Ovary (tissue), 10 donors: ENCODE measurements at regions of chr11 and their contacts with region 1.

Region 1: DNA sequence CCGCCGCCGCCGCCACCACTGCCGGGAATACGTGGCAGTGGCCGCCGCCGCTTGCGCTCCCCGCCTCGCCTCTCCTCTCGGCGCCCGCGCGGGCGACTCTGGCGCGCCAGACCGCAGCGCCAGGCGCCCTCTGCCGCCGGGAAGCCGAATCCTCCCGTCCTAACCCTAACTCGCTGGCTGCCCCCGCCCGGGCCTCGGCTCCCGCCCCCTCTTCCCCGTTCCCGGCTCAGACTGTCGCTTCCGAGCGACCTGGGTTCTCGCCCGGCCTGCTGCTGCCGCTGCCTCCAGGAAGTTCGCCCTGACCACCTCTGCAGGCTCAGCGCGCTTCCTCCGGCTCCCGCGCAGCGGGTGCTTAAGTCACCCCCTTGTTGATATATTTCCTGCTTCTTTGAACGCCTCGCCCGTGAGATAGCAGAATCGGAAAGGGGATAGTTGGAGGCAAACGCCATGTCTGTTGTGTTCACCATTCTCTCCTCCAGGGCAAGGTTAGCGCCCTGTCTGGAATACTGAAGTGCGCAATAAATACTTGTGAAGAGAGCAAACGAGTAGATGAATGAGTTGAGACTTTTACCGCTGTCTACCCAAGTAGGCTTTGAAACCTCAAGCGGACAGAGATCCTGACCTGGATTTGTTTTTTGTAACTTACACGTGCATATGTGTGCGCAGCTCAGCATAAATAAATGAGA is at the start of gene SMCO4:
- DNase-seq: peak; percentile 77 to 88 (median 83)
- H3K4me3 ChIP-seq: peak within 1 kb of the TSS; percentile 82
- H3K27ac ChIP-seq: peak within 1 kb of the TSS; percentile 81 to 86
- H3K4me1 ChIP-seq: peaks cover 5% of the 10 kb centered on the region
- H3K27me3 ChIP-seq: no peaks in the 10 kb centered on the region
- CTCF ChIP-seq: peak; percentile 63 to 71 (median 68)
- EP300 ChIP-seq: no peak
- POLR2A ChIP-seq: peak; percentile 24
- total RNA-seq, gene SMCO4: 10.8 to 26.5 (median 20.2) TPM

Region 2: DNA sequence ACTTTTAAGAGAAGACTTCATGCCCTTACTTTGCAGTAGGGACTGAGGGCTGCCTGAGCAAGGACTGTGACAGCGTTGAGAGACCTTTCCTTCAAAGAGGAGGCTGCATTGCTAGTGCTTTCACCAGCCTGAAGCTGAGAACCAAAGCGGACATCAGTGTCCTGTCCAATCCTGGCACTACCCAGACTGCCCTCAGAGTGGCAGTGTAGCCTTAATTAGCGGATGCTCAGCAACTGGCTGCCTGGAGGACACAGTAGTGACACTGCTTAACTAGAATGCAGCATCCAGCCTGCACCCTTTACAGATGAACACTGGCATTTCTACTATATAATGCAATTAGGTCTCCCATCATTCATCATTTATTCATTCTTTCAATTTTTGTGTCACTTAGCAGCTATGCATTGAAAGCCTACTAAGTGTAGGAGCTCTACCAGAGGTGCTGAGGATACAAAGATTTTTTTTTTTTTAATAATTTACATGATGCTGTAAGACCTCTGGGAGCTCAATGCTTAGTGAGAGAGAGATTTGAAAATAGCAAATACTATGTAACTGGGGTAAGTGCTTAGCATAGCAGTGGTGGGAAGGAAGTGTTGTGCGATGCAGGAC is 308.7 kb before region 1 on chr11:
- intact Hi-C with region 1: loop called (anchors 2 to 10 kb)
- DNase-seq: peak; percentile 60 to 79 (median 77)
- H3K4me3 ChIP-seq: no peak overlapping the region
- H3K27ac ChIP-seq: no peak overlapping the region
- H3K4me1 ChIP-seq: no peaks in the 10 kb centered on the region
- H3K27me3 ChIP-seq: no peaks in the 10 kb centered on the region
- CTCF ChIP-seq: peak; percentile 56 to 77 (median 64)
- EP300 ChIP-seq: no peak
- POLR2A ChIP-seq: no peak